ENCODE measurements at regions of chr2 and their contacts with region 1.

Region 1: DNA sequence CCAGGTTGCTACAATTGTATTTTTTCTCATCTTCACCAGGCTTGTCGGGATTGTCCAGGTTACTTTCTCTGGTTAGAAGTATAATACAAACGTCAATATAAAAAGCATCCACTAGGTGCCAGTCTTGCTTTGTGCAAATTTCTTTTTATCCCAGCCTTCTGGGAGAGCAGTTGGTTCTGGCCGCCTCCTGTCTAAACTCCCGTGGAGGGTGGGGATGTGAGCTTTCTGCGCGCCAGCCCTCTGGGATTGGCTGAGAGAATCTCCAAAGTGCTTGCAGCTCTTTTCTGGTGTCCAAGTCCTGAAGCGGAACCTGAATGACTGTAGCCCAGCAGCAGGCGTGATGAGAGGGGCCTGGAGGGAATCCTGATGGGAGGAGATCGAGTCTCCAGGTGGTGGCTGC is 22.4 kb upstream of the TOGARAM2 start:
- DNase-seq: peak in 7 of 9 donors; percentile 32 to 63 (median 53)
- ATAC-seq: peak; percentile 80
- H3K4me3 ChIP-seq: no peak overlapping the region
- H3K4me3 Mint-ChIP-seq: no peak overlapping the region
- H3K27ac ChIP-seq: no peak overlapping the region
- H3K27ac Mint-ChIP-seq: peak overlapping the region in 1 of 9 donors; percentile 12
- H3K4me1 ChIP-seq: no peaks in the 10 kb centered on the region
- H3K4me1 Mint-ChIP-seq: peaks cover 0 to 18% (median 4%) of the 10 kb centered on the region in 7 donors
- H3K27me3 ChIP-seq: no peaks in the 10 kb centered on the region
- H3K27me3 Mint-ChIP-seq: peaks cover 0 to 13% (median 0%) of the 10 kb centered on the region in 5 donors

Region 2: DNA sequence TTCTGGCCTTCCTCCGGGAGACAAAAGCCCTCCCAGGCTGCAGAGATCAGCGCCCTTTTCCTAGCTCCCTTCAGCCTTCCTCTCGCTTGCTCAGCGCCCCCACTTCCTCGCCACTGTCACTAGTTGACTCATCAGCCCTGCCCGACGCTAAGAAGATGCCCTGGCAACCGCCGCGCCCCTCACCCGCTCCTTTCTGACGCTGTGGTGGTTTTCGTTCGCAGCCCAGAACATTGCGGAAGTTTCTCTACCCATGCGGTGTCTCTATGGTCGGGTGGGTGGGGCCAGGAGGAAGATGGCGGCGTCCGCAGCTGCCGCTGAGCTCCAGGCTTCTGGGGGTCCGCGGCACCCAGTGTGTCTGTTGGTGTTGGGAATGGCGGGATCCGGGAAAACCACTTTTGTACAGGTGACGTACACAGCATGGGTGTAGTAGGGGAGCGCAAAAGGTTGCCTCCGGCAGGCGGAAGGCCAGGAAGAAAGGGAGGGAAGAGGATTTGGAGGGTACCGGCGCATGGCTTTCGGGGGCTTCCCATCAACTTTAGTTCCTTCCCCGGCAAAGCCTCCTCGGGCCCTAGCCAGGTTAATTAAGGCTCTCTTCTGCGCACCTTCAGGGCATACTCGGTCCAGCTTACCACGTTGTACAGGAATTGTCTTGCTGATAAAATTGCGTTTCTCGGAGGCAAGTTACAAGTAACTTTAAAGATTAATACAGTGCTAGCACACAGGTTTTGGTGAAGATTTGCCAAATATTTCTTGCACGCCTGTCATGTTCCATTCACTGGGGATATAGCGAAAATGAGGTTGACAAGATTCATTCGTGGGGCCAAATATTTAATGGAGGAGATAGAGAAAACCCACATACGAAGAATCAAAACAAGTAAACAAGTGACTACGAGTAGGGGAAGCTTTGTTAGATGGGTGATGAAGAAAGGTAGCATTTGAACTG is 1329.7 kb before region 1 on chr2 and contains the starts of genes CCDC121 and GPN1:
- CTCF ChIA-PET with region 1: no interaction called
- POLR2A ChIA-PET with region 1: no interaction called
- intact Hi-C with region 1: no loop called
- DNase-seq: peak; percentile 79 to 96 (median 93)
- ATAC-seq: peak; percentile 99
- H3K4me3 ChIP-seq: peak within 1 kb of the TSS; percentile 92
- H3K4me3 Mint-ChIP-seq: no peak within 1 kb of the TSS
- H3K27ac ChIP-seq: peak within 1 kb of the TSS; percentile 92
- H3K27ac Mint-ChIP-seq: peak within 1 kb of the TSS in 5 of 9 donors; percentile 16 to 72 (median 59)
- H3K4me1 ChIP-seq: peaks cover 11 to 13% of the 10 kb centered on the region in 2 donors
- H3K4me1 Mint-ChIP-seq: peaks cover 1 to 33% (median 22%) of the 10 kb centered on the region in 7 donors
- H3K27me3 ChIP-seq: no peaks in the 10 kb centered on the region
- H3K27me3 Mint-ChIP-seq: no peaks in the 10 kb centered on the region
- total RNA-seq, gene CCDC121: 0.61 to 2.7 (median 1.9) TPM
- total RNA-seq, gene GPN1: 27.8 to 45.5 (median 28.9) TPM

Region 3: DNA sequence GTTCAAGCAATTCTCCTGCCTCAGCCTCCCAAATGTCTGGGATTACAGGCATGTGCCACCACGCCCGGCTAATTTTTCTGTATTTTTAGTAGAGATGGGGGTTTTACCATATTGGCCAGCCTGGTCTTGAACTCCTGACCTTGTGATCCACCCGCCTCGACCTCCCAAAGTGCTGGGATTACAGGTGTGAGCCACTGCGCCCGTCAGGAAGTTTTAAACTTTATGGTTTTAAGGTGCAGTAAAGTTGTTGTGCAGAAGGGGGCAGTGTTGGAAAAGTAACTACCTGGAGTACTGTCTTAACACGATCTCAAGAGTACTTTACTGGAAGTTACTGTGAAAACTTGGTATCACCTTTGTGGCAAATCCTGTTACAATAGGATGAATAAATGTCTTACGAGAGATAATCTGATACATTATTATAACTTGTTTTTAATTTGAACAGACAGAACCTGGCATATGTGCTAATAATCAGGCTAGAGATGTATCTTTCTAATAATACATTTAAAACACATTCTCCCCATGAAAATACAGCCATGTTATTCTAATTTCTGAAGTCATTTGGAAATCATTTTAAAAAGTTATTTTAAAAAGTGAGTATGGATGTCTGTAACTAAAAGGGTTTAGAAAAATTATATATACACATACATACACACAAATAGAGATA is 137.3 kb before region 1 on chr2:
- CTCF ChIA-PET with region 1: no interaction called
- POLR2A ChIA-PET with region 1: no interaction called
- intact Hi-C with region 1: loop called in 1 of 2 experiments (anchors 2 kb)
- DNase-seq: peak in 8 of 9 donors; percentile 39 to 74 (median 60)
- ATAC-seq: peak; percentile 93
- H3K4me3 ChIP-seq: no peak overlapping the region
- H3K4me3 Mint-ChIP-seq: no peak overlapping the region
- H3K27ac ChIP-seq: no peak overlapping the region
- H3K27ac Mint-ChIP-seq: peak overlapping the region in 1 of 9 donors; percentile 7
- H3K4me1 ChIP-seq: no peaks in the 10 kb centered on the region
- H3K4me1 Mint-ChIP-seq: peaks cover 0 to 5% (median 2%) of the 10 kb centered on the region in 7 donors
- H3K27me3 ChIP-seq: no peaks in the 10 kb centered on the region
- H3K27me3 Mint-ChIP-seq: peaks cover 0 to 3% (median 0%) of the 10 kb centered on the region in 5 donors

Region 4: GRCh38 chr2:29196792-29197788 is 238.4 kb after region 1 on chr2:
- CTCF ChIA-PET with region 1: interaction called, 5 read pairs
- POLR2A ChIA-PET with region 1: no interaction called
- intact Hi-C with region 1: loop called (anchors 1 kb)
- DNase-seq: peak; percentile 46 to 86 (median 73)
- ATAC-seq: peak; percentile 96
- H3K4me3 ChIP-seq: no peak overlapping the region
- H3K4me3 Mint-ChIP-seq: no peak overlapping the region
- H3K27ac ChIP-seq: no peak overlapping the region
- H3K27ac Mint-ChIP-seq: peak overlapping the region in 1 of 9 donors; percentile 67
- H3K4me1 ChIP-seq: no peaks in the 10 kb centered on the region
- H3K4me1 Mint-ChIP-seq: peaks cover 0 to 9% (median 5%) of the 10 kb centered on the region in 7 donors
- H3K27me3 ChIP-seq: no peaks in the 10 kb centered on the region
- H3K27me3 Mint-ChIP-seq: no peaks in the 10 kb centered on the region

Region 5: DNA sequence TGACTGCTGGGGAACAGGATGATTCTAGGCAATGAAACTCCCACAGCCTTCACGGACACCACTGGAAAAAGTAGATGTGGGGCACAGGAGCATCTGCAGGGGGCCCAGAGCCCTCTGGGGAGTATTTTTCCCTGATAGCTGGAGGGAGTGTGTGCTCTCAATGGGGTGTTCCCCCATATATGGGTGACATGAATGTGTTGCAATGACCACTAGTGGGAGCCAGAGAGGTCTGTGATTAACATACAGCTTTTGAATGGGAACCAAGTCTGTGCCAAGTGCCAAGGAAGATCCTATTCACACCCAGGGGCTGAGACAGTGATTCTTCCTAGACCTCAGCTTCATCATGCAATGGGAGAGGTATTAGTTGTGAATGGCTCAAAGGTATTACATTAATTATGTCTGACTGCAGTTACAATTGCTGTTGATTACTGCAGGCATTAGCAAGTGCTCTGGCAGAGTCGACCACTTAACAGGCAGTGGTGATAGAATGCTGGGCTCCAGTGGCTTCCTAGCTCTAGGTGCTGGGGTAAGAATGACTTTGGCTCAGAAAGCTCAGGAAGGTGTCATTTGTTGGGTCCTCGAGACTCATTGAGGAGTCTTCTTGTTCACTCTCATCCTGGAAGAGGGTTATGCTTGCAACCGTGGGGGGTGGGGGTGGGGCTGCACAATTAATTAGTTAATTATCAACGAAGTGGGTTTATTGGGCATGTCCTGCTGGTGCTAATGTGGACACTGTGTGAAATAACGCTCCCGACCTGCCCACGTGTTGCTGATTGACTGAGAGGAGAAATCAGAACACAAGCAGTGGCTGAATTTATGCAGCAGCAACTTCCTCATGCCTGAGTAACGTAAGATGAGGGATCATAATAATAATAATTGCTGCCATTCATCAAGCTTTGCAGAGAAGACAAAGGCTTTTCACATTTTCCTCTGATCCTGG is 350.7 kb after region 1 on chr2:
- CTCF ChIA-PET with region 1: interaction called, 3 read pairs
- POLR2A ChIA-PET with region 1: no interaction called
- intact Hi-C with region 1: loop called in 1 of 2 experiments (anchors 1 kb)
- DNase-seq: peak in 7 of 9 donors; percentile 21 to 43 (median 29)
- ATAC-seq: peak; percentile 83
- H3K4me3 ChIP-seq: no peak overlapping the region
- H3K4me3 Mint-ChIP-seq: no peak overlapping the region
- H3K27ac ChIP-seq: no peak overlapping the region
- H3K27ac Mint-ChIP-seq: no peak overlapping the region
- H3K4me1 ChIP-seq: peaks cover 1 to 4% of the 10 kb centered on the region in 2 donors
- H3K4me1 Mint-ChIP-seq: peaks cover 3 to 20% (median 10%) of the 10 kb centered on the region in 7 donors
- H3K27me3 ChIP-seq: no peaks in the 10 kb centered on the region
- H3K27me3 Mint-ChIP-seq: peaks cover 9 to 36% (median 21%) of the 10 kb centered on the region in 5 donors

Region 6: DNA sequence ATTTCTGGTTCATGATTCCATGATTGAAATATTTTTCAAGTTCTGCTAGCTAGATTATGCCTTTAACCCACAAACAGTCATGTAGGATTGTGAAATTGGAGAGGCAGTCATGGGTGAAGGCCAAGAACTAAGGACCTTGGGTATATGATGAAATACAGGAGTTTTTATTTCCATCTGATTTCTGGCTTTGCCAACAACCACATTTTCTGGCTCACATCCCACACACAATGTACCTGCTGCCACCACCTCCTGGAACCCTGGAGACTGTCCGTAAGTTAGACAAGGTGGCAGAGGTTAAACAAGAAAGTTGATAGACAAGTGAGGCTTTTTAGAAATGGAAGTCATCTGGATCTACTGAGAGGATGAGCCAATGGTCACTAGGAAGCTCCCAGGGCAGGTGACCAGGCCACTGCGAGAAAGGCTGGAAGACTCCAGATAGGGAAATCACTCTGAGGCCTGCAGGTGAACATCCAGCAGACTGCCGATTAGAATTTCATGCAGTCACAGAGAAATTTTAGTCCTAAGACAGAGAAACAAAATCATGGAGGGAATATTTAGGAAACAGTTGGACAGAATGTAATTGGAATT is 560.7 kb after region 1 on chr2:
- CTCF ChIA-PET with region 1: no interaction called
- POLR2A ChIA-PET with region 1: no interaction called
- intact Hi-C with region 1: no loop called
- DNase-seq: no peak
- ATAC-seq: no peak
- H3K4me3 ChIP-seq: no peak overlapping the region
- H3K4me3 Mint-ChIP-seq: no peak overlapping the region
- H3K27ac ChIP-seq: no peak overlapping the region
- H3K27ac Mint-ChIP-seq: no peak overlapping the region
- H3K4me1 ChIP-seq: no peaks in the 10 kb centered on the region
- H3K4me1 Mint-ChIP-seq: peaks cover 0 to 5% (median 0%) of the 10 kb centered on the region in 7 donors
- H3K27me3 ChIP-seq: no peaks in the 10 kb centered on the region
- H3K27me3 Mint-ChIP-seq: peaks cover 8 to 34% (median 19%) of the 10 kb centered on the region in 5 donors

Region 7: DNA sequence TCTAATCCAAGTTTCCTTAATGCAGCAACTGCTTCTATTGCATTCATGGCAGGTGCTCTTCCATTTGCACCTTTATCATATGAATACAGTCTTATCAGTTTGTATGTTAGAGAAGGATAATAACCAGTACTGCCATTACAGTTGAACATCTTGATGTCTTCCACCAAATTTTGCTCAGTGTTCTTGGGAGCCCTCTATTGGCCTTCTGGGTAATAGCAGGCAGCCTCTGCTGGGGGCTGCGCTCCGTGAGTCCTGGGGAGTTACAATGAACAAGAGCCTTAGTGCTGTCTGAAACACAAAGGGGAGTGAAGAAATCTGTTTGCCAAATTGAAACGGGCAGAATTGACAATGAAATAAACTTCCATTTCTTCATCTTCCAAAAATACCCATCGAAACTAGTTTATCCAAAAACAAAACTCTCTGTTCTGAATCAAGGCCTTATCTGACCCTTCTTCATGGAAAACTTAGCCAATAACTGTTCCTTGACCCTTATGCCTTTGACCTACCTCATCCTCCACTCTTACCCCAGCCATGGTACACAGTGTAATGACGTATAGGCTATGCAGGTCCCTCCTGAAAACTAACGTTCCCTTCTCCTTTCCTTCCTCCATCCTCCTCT is 882.8 kb after region 1 on chr2:
- CTCF ChIA-PET with region 1: no interaction called
- POLR2A ChIA-PET with region 1: no interaction called
- intact Hi-C with region 1: loop called in 1 of 2 experiments (anchors 5 kb)
- DNase-seq: peak in 3 of 9 donors; percentile 7 to 10 (median 8)
- ATAC-seq: peak; percentile 45
- H3K4me3 ChIP-seq: no peak overlapping the region
- H3K4me3 Mint-ChIP-seq: no peak overlapping the region
- H3K27ac ChIP-seq: no peak overlapping the region
- H3K27ac Mint-ChIP-seq: no peak overlapping the region
- H3K4me1 ChIP-seq: no peaks in the 10 kb centered on the region
- H3K4me1 Mint-ChIP-seq: no peaks in the 10 kb centered on the region
- H3K27me3 ChIP-seq: no peaks in the 10 kb centered on the region
- H3K27me3 Mint-ChIP-seq: peaks cover 3 to 38% (median 33%) of the 10 kb centered on the region in 5 donors

Region 8: DNA sequence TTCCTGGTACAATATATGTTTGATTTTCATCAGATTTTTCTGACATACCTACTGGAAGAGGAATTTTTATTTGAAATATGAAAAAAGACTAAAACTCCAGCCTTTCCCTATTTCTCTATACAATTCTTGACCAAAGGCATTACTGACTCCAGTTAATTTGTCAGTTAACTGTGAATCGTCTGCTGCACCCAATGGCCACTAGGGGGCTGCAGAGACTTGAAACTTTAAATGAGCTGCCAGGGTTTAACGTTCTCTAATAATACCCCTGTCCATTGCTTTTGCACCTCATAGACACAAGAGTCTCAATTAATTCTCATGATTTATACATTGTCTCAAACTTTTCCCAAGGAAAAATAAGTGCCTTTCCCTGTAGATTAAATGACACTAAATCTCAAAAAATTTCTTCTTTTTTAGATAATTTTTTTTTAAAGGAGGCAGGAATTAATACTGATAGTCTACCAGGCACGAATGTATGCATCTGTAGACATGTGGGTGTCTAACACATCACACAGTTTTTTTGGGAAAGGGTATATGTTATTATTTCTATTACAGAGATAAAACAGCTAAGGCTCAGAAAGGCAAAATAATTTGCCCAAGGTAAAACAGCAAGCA is 964.5 kb after region 1 on chr2:
- CTCF ChIA-PET with region 1: no interaction called
- POLR2A ChIA-PET with region 1: no interaction called
- intact Hi-C with region 1: loop called in 1 of 2 experiments (anchors 5 kb)
- DNase-seq: peak in 4 of 9 donors; percentile 12 to 27 (median 20)
- ATAC-seq: no peak
- H3K4me3 ChIP-seq: no peak overlapping the region
- H3K4me3 Mint-ChIP-seq: peak overlapping the region in 1 of 10 donors; percentile 42
- H3K27ac ChIP-seq: no peak overlapping the region
- H3K27ac Mint-ChIP-seq: no peak overlapping the region
- H3K4me1 ChIP-seq: peaks cover 0 to 11% of the 10 kb centered on the region in 2 donors
- H3K4me1 Mint-ChIP-seq: peaks cover 0 to 28% (median 19%) of the 10 kb centered on the region in 7 donors
- H3K27me3 ChIP-seq: peaks cover 10 to 29% of the 10 kb centered on the region in 2 donors
- H3K27me3 Mint-ChIP-seq: peaks cover 46 to 59% (median 49%) of the 10 kb centered on the region in 5 donors